ENCODE measurements at regions of chr10 and their contacts with region 1.

Region 1: GRCh38 chr10:110547139-110547761 is 20.2 kb upstream of the SMC3 start:
- DNase-seq: no peak
- H3K4me3 ChIP-seq: no peak overlapping the region
- H3K27ac ChIP-seq: no peak overlapping the region
- H3K4me1 ChIP-seq: no peaks in the 10 kb centered on the region
- H3K27me3 ChIP-seq: no peaks in the 10 kb centered on the region
- CTCF ChIP-seq: peak; percentile 49 to 86 (median 82)

Region 2: GRCh38 chr10:110304780-110305421 is 242.3 kb before region 1 on chr10 and contains the start of gene SMNDC1:
- intact Hi-C with region 1: loop called (anchors 1 kb)
- DNase-seq: peak; percentile 90 to 99
- H3K4me3 ChIP-seq: peak within 1 kb of the TSS; percentile 75 to 99
- H3K27ac ChIP-seq: peak within 1 kb of the TSS; percentile 95 to 96
- H3K4me1 ChIP-seq: peaks cover 5 to 36% of the 10 kb centered on the region in 2 donors
- H3K27me3 ChIP-seq: no peaks in the 10 kb centered on the region
- CTCF ChIP-seq: no peak
- total RNA-seq, gene SMNDC1: 6.9 TPM

Region 3: DNA sequence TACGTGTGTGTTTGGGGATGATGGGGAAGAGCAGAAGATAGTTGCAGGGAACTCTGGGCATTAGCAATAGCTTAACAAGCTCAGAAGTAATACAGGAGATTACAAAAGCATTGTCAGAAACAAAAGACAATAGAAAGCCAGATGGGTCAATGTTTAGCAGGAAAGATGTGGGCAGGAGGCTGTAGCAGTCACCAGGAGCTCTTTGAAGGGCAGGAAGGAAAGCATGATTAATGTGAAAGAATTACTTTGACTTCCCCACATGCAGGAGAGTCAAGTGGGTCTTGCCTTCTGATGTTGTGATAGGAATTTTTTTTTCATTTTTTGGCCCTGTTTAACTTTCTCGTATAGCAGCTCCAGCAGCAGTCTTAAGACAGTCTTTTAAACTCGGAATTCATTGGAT is 236.5 kb before region 1 on chr10:
- intact Hi-C with region 1: loop called (anchors 1 kb)
- DNase-seq: no peak
- H3K4me3 ChIP-seq: no peak overlapping the region
- H3K27ac ChIP-seq: no peak overlapping the region
- H3K4me1 ChIP-seq: peaks cover 0 to 2% of the 10 kb centered on the region in 2 donors
- H3K27me3 ChIP-seq: no peaks in the 10 kb centered on the region
- CTCF ChIP-seq: no peak

Measured in ascending aorta (tissue), 2 donors.